HEK293 (cell line): ENCODE measurements at regions of chr2 and their contacts with region 1.

Region 1: GRCh38 chr2:120252225-120253021 is at the start of gene RALB:
- H3K4me3 ChIP-seq: peak within 1 kb of the TSS; percentile 63
- H3K27ac ChIP-seq: peak within 1 kb of the TSS; percentile 59; the same call in 1 of the 2 replicates
- H3K4me1 ChIP-seq: peaks cover 2% of the 10 kb centered on the region; the same call in 1 of the 2 replicates
- CTCF ChIP-seq: 0 out of 2 replicates have a peak, but pooled peaks have one; percentile 30

Region 2: GRCh38 chr2:120223034-120223912 is 29.1 kb before region 1 on chr2 and contains the start of gene TMEM185B:
- CTCF ChIA-PET with region 1: no interaction called
- POLR2A ChIA-PET with region 1: interaction called, 14 read pairs
- H3K4me3 ChIP-seq: peak within 1 kb of the TSS; percentile 66
- H3K27ac ChIP-seq: peak within 1 kb of the TSS; percentile 81
- H3K4me1 ChIP-seq: no peaks in the 10 kb centered on the region
- CTCF ChIP-seq: peak; percentile 71; the same call in 1 of the 2 replicates